Activated CD4-positive, alpha-beta T cell treated with anti-CD3 and anti-CD28 coated beads, Interleukin-2, amount 10 ng/mL, durations not matched to agents 7 days and 5 days (primary cell): ENCODE measurements at regions of chr17 and their contacts with region 1.

Region 1: GRCh38 chr17:27552469-27552779 is 78.6 kb upstream of the LGALS9 start:
- DNase-seq: no peak
- H3K4me3 Mint-ChIP-seq: no peak overlapping the region
- H3K27ac Mint-ChIP-seq: no peak overlapping the region
- H3K4me1 Mint-ChIP-seq: peaks cover 26% of the 10 kb centered on the region
- H3K27me3 Mint-ChIP-seq: no peaks in the 10 kb centered on the region

Region 2: DNA sequence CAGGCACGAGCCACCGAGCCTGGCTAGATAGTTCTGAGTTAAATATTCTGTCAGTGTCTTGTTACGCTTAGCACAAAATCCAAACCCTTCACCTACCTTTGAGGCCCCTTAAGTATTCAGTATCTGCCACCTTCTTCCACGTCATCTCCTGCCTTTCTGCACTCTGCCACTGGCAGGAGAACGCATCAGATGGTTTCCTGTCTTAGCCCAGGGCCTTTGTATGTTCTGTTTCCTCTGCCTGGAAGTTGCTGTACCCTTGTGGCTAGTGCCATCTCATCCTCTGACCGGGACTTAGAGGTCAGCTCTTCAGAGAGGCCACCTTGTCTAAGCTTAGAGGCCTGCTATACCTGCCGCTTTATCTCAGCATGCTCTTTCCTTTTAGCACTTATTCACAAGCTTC is 11.1 kb after region 1 on chr17:
- CTCF ChIA-PET with region 1: interaction called, 11 read pairs
- POLR2A ChIA-PET with region 1: no interaction called
- DNase-seq: no peak
- H3K4me3 Mint-ChIP-seq: no peak overlapping the region
- H3K27ac Mint-ChIP-seq: peak overlapping the region; percentile 72
- H3K4me1 Mint-ChIP-seq: peaks cover 45% of the 10 kb centered on the region
- H3K27me3 Mint-ChIP-seq: no peaks in the 10 kb centered on the region